Activated CD8-positive, alpha-beta T cell treated with anti-CD3 and anti-CD28 coated beads for 36 hours (primary cell): ENCODE measurements at regions of chr6 and their contacts with region 1.

Region 1: GRCh38 chr6:75208298-75209183 is 2.7 kb upstream of the COL12A1 start:
- DNase-seq: peak; percentile 87
- ATAC-seq: peak; percentile 85
- H3K4me3 Mint-ChIP-seq: peak overlapping the region; percentile 26
- H3K27ac Mint-ChIP-seq: no peak overlapping the region
- H3K4me1 Mint-ChIP-seq: peaks cover 45% of the 10 kb centered on the region
- H3K27me3 Mint-ChIP-seq: peaks cover 71% of the 10 kb centered on the region
- CTCF ChIP-seq: peak; percentile 90

Region 2: DNA sequence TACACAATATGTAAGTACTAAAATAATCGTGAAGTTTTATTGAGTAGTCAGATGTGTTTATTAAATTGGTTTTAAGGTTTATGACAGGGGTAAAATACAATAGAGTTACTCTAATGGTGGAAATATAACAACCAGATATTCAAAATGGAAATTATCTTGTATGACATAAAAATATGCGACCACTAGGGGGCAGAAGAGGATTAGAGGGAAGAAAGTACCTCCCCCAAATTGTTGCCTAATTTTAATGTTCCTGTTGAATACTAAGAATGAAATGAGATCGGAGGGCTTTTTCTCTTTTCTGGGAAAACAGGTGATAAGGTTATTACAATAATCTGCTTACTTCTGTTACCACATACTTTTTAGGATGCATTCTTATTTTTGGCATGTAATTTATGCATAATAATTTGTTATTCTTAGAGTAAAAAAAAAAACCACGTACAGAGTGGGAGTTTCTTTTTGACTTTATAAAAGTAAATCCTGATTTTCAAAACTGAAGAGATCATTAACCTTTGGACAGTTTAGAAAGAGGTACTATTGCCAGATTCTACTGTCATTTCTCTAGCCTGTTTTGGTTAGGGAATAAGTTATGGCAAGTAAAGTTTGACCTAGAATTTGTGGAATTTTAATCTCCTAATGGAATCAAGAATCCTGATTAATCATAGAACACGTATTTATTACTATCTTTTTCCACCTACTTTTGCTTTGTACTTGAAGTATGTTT is 1353.4 kb before region 1 on chr6:
- CTCF ChIA-PET with region 1: interaction called, 32 read pairs
- POLR2A ChIA-PET with region 1: no interaction called
- intact Hi-C with region 1: loop called (anchors 5 kb)
- DNase-seq: peak; percentile 4
- ATAC-seq: peak; percentile 34
- H3K4me3 Mint-ChIP-seq: no peak overlapping the region
- H3K27ac Mint-ChIP-seq: no peak overlapping the region
- H3K4me1 Mint-ChIP-seq: peaks cover 2% of the 10 kb centered on the region
- H3K27me3 Mint-ChIP-seq: no peaks in the 10 kb centered on the region
- CTCF ChIP-seq: peak; percentile 89

Region 3: DNA sequence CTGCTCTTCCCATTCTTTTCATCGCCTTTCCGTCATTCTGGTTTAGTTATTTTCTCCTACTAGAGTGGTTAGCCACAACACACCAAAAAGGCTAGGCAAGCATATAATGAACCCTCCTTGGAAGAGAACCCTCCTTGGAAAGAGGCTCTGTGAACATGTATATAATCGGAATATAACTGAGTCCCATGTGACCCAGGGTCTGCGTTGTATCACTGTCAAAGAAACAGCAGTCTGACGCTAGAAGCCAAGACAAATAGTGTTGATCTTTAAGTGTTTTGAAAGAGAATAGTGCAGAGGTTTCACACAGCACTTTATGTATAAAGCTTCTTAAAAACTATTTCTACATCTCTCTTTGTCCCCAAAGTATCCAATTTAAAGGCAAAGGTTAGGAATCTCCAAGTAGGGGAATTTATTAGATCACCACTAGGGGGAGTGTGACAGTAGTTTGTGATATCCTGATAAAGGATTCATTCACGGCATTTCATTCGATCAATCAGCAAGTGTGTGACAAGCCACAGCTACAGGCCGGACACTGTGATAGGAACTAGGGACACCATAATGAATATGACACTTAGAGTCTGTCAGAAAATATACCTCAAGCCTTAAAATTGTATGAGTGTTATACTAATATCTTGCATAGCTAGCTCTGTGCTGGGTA is 1117.3 kb before region 1 on chr6:
- CTCF ChIA-PET with region 1: interaction called, 40 read pairs
- POLR2A ChIA-PET with region 1: no interaction called
- intact Hi-C with region 1: loop called (anchors 5 kb)
- DNase-seq: no peak
- ATAC-seq: no peak
- H3K4me3 Mint-ChIP-seq: no peak overlapping the region
- H3K27ac Mint-ChIP-seq: no peak overlapping the region
- H3K4me1 Mint-ChIP-seq: no peaks in the 10 kb centered on the region
- H3K27me3 Mint-ChIP-seq: peaks cover 7% of the 10 kb centered on the region
- CTCF ChIP-seq: peak; percentile 71

Region 4: DNA sequence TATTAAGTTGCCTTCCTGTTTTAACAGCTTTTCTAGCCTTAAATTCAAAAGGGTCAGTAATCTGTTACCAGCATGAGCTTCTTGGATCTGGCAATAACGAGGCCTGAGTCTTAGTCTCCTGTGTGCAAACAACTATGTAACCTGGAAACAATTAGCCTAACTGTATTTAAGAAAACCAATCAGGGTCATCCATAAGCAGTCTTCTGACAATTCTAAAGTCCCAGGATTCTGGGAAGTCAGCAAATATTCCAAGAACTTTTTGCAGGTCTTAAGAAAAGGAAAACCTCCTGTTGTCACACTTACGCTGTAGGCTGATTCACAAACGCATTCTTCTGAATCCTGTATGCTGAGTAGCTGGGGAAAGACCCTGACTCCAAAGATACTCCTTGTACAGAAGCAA is 93.1 kb before region 1 on chr6:
- CTCF ChIA-PET with region 1: interaction called, 10 read pairs
- POLR2A ChIA-PET with region 1: no interaction called
- intact Hi-C with region 1: no loop called
- DNase-seq: no peak
- ATAC-seq: no peak
- H3K4me3 Mint-ChIP-seq: no peak overlapping the region
- H3K27ac Mint-ChIP-seq: no peak overlapping the region
- H3K4me1 Mint-ChIP-seq: no peaks in the 10 kb centered on the region
- H3K27me3 Mint-ChIP-seq: no peaks in the 10 kb centered on the region
- CTCF ChIP-seq: no peak